ENCODE measurements at regions of chr3 and their contacts with region 1.

Region 1: GRCh38 chr3:50358911-50359759 is at the start of gene TMEM115:
- DNase-seq: peak; percentile 98
- ATAC-seq: peak; percentile 96
- H3K4me3 ChIP-seq: peak within 1 kb of the TSS; percentile 85
- H3K27ac ChIP-seq: peak within 1 kb of the TSS; percentile 39
- H3K4me1 ChIP-seq: peaks cover 32% of the 10 kb centered on the region
- H3K27me3 ChIP-seq: no peaks in the 10 kb centered on the region
- CTCF ChIP-seq: no peak
- total RNA-seq, gene TMEM115: 54.9 and 56.6 TPM in 2 replicates

Region 2: GRCh38 chr3:50327943-50328691 is 31.0 kb before region 1 on chr3 and contains the start of gene TUSC2:
- CTCF ChIA-PET with region 1: interaction called, 10 read pairs
- POLR2A ChIA-PET with region 1: no interaction called
- intact Hi-C with region 1: no loop called
- DNase-seq: peak; percentile 99
- ATAC-seq: peak; percentile 90
- H3K4me3 ChIP-seq: peak within 1 kb of the TSS; percentile 96
- H3K27ac ChIP-seq: peak within 1 kb of the TSS; percentile 4; the same call in 1 of the 2 replicates
- H3K4me1 ChIP-seq: peaks cover 10% of the 10 kb centered on the region; the same call in 1 of the 2 replicates
- H3K27me3 ChIP-seq: no peaks in the 10 kb centered on the region
- CTCF ChIP-seq: no peak
- total RNA-seq, gene TUSC2: 143 and 156 TPM in 2 replicates

Measured in PC-3 (cell line).